ENCODE measurements at regions of chr6 and their contacts with region 1.

Region 1: GRCh38 chr6:26156076-26156849 is 69.0 kb downstream of the HFE start:
- DNase-seq: peak; percentile 87
- ATAC-seq: peak; percentile 59
- H3K4me3 Mint-ChIP-seq: peak overlapping the region; percentile 88
- H3K27ac Mint-ChIP-seq: peak overlapping the region; percentile 99
- H3K4me1 Mint-ChIP-seq: peaks cover 45% of the 10 kb centered on the region
- H3K27me3 Mint-ChIP-seq: no peaks in the 10 kb centered on the region
- CTCF ChIP-seq: no peak

Region 2: DNA sequence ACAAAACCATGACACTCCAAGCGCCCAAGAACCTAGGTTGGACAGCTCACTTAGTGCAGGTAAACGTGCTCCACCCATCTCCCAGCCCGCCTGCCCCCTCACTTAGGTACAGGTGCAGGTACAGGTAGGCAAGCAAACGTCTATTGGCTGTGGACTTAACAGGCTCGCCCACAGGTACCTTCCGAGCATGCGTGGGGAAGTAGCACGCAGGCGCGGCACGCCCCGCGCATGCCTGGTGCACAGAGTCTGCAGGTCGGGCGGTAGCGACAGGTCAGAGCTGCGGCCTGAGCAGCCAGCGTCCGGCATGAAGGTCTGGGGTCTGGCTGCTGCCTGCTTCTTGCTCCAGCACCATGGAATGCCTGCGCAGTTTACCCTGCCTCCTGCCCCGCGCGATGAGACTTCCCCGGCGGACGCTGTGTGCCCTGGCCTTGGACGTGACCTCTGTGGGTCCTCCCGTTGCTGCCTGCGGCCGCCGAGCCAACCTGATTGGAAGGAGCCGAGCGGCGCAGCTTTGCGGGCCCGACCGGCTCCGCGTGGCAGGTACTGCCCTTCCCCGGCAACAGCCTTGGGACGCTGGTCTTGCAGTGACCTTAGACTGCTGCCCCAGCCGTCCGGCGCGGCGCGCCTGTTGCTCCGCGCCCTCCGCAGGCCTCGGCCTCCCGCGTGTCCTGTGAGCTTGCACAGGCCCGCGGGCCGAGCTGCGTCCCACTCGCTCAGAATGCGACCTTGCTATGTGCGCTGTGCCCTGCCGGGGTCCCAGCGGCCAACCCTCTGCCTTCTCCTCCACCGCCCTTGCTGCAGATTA is 1753.4 kb before region 1 on chr6 and contains the start of gene MRS2:
- CTCF ChIA-PET with region 1: no interaction called
- POLR2A ChIA-PET with region 1: no interaction called
- intact Hi-C with region 1: no loop called
- DNase-seq: peak; percentile 75
- ATAC-seq: peak; percentile 96
- H3K4me3 Mint-ChIP-seq: peak within 1 kb of the TSS; percentile 96
- H3K27ac Mint-ChIP-seq: peak within 1 kb of the TSS; percentile 78
- H3K4me1 Mint-ChIP-seq: peaks cover 31% of the 10 kb centered on the region
- H3K27me3 Mint-ChIP-seq: peaks cover 8% of the 10 kb centered on the region
- CTCF ChIP-seq: no peak
- total RNA-seq, gene MRS2: 21.8 and 24.3 TPM in 2 replicates

Region 3: GRCh38 chr6:26075063-26075717 is 81.1 kb before region 1 on chr6:
- CTCF ChIA-PET with region 1: no interaction called
- POLR2A ChIA-PET with region 1: no interaction called
- intact Hi-C with region 1: no loop called
- DNase-seq: no peak
- ATAC-seq: no peak
- H3K4me3 Mint-ChIP-seq: no peak overlapping the region
- H3K27ac Mint-ChIP-seq: no peak overlapping the region
- H3K4me1 Mint-ChIP-seq: no peaks in the 10 kb centered on the region
- H3K27me3 Mint-ChIP-seq: peaks cover 7% of the 10 kb centered on the region
- CTCF ChIP-seq: no peak

Region 4: GRCh38 chr6:26097268-26097875 is 58.9 kb before region 1 on chr6:
- CTCF ChIA-PET with region 1: no interaction called
- POLR2A ChIA-PET with region 1: interaction called, 160 read pairs
- intact Hi-C with region 1: no loop called
- DNase-seq: no peak
- ATAC-seq: peak; percentile 81
- H3K4me3 Mint-ChIP-seq: no peak overlapping the region
- H3K27ac Mint-ChIP-seq: no peak overlapping the region
- H3K4me1 Mint-ChIP-seq: peaks cover 16% of the 10 kb centered on the region
- H3K27me3 Mint-ChIP-seq: no peaks in the 10 kb centered on the region
- CTCF ChIP-seq: no peak

Region 5: GRCh38 chr6:26175428-26176181 is 19.3 kb after region 1 on chr6:
- CTCF ChIA-PET with region 1: interaction called, 11 read pairs
- POLR2A ChIA-PET with region 1: interaction called, 427 read pairs
- intact Hi-C with region 1: loop called (anchors 1 kb)
- DNase-seq: no peak
- ATAC-seq: no peak
- H3K4me3 Mint-ChIP-seq: no peak overlapping the region
- H3K27ac Mint-ChIP-seq: peak overlapping the region; percentile 65
- H3K4me1 Mint-ChIP-seq: peaks cover 38% of the 10 kb centered on the region
- H3K27me3 Mint-ChIP-seq: no peaks in the 10 kb centered on the region
- CTCF ChIP-seq: no peak

Region 6: GRCh38 chr6:26249957-26250697 is 93.9 kb after region 1 on chr6:
- CTCF ChIA-PET with region 1: no interaction called
- POLR2A ChIA-PET with region 1: interaction called, 70 read pairs
- intact Hi-C with region 1: no loop called
- DNase-seq: peak; percentile 57
- ATAC-seq: peak; percentile 63
- H3K4me3 Mint-ChIP-seq: peak overlapping the region; percentile 94
- H3K27ac Mint-ChIP-seq: peak overlapping the region; percentile 90
- H3K4me1 Mint-ChIP-seq: peaks cover 36% of the 10 kb centered on the region
- H3K27me3 Mint-ChIP-seq: no peaks in the 10 kb centered on the region
- CTCF ChIP-seq: no peak

Region 7: GRCh38 chr6:26537846-26538571 is 381.7 kb after region 1 on chr6 and contains the start of gene HMGN4:
- CTCF ChIA-PET with region 1: no interaction called
- POLR2A ChIA-PET with region 1: interaction called, 20 read pairs
- intact Hi-C with region 1: no loop called
- DNase-seq: peak; percentile 73
- ATAC-seq: peak; percentile 67
- H3K4me3 Mint-ChIP-seq: peak within 1 kb of the TSS; percentile 98
- H3K27ac Mint-ChIP-seq: peak within 1 kb of the TSS; percentile 97
- H3K4me1 Mint-ChIP-seq: peaks cover 65% of the 10 kb centered on the region
- H3K27me3 Mint-ChIP-seq: peaks cover 7% of the 10 kb centered on the region
- CTCF ChIP-seq: no peak
- total RNA-seq, gene HMGN4: 74.5 and 82.2 TPM in 2 replicates

Region 8: DNA sequence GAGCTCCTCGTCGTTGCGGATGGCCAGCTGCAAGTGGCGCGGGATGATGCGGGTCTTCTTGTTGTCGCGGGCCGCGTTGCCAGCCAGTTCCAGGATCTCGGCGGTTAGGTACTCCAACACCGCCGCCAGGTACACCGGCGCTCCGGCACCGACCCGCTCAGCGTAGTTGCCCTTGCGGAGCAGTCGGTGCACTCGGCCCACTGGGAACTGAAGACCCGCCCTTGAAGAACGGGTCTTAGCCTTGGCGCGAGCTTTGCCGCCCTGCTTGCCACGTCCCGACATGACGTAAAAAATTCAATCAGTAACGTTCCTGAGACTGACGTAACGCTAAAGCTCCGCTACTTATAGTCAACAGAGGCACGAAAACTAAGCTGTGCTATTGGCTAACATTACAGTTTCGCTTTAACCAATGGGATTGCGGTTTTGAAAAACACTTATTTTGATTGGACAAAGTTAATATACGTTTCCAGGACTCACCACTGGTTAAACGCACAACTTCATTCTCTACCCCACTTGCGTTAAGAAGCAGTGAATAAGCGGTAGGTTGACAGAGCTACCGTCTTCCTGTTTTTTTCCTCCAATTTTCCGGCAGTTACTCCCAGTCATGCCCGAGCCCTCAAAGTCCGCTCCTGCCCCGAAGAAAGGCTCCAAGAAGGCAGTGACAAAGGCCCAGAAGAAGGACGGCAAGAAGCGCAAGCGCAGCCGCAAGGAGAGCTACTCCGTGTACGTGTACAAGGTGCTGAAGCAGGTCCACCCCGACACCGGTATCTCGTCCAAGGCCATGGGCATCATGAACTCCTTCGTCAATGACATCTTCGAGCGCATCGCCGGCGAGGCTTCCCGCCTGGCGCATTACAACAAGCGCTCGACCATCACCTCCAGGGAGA is 1682.0 kb after region 1 on chr6:
- CTCF ChIA-PET with region 1: no interaction called
- POLR2A ChIA-PET with region 1: interaction called, 64 read pairs
- intact Hi-C with region 1: loop called (anchors 2 kb)
- DNase-seq: peak; percentile 73
- ATAC-seq: peak; percentile 76
- H3K4me3 Mint-ChIP-seq: no peak overlapping the region
- H3K27ac Mint-ChIP-seq: no peak overlapping the region
- H3K4me1 Mint-ChIP-seq: peaks cover 18% of the 10 kb centered on the region
- H3K27me3 Mint-ChIP-seq: no peaks in the 10 kb centered on the region
- CTCF ChIP-seq: no peak

Measured in activated B cell treated with CpG ODN at 0.5 μM for 24 hours (primary cell).